ENCODE measurements at regions of chr3 and their contacts with region 1.

Region 1: DNA sequence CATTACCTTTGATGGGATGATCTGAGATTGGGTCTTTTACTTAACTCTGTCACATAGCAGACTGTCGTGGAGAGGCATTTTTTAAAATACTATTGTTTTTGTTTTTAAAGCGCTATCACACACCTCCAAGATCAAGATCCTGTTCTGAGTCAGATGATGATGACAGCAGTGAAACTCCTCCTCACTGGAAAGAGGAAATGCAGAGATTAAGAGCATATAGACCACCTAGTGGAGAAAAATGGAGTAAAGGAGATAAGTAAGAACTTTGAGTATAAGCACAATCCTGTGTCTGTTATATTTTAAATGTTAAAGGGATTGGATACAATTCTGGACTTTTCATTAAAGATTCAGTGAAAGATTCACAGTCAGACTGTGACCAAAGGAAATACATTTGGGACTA is 18.4 kb upstream of the ZBTB47 start:
- DNase-seq: no peak
- H3K4me3 Mint-ChIP-seq: no peak overlapping the region
- H3K27ac Mint-ChIP-seq: no peak overlapping the region
- H3K4me1 Mint-ChIP-seq: peaks cover 11% of the 10 kb centered on the region
- H3K27me3 Mint-ChIP-seq: no peaks in the 10 kb centered on the region

Region 2: GRCh38 chr3:42502429-42503250 is 132.5 kb before region 1 on chr3 and contains the start of gene VIPR1:
- intact Hi-C with region 1: loop called (anchors 5 kb)
- DNase-seq: peak; percentile 78
- H3K4me3 Mint-ChIP-seq: peak within 1 kb of the TSS; percentile 89
- H3K27ac Mint-ChIP-seq: no peak within 1 kb of the TSS
- H3K4me1 Mint-ChIP-seq: peaks cover 19% of the 10 kb centered on the region
- H3K27me3 Mint-ChIP-seq: peaks cover 42% of the 10 kb centered on the region
- total RNA-seq, gene VIPR1: 0.51 and 0.52 TPM in 2 replicates

Region 3: GRCh38 chr3:42569593-42570142 is 65.4 kb before region 1 on chr3:
- intact Hi-C with region 1: no loop called
- DNase-seq: no peak
- H3K4me3 Mint-ChIP-seq: no peak overlapping the region
- H3K27ac Mint-ChIP-seq: no peak overlapping the region
- H3K4me1 Mint-ChIP-seq: peaks cover 10% of the 10 kb centered on the region
- H3K27me3 Mint-ChIP-seq: no peaks in the 10 kb centered on the region

Region 4: DNA sequence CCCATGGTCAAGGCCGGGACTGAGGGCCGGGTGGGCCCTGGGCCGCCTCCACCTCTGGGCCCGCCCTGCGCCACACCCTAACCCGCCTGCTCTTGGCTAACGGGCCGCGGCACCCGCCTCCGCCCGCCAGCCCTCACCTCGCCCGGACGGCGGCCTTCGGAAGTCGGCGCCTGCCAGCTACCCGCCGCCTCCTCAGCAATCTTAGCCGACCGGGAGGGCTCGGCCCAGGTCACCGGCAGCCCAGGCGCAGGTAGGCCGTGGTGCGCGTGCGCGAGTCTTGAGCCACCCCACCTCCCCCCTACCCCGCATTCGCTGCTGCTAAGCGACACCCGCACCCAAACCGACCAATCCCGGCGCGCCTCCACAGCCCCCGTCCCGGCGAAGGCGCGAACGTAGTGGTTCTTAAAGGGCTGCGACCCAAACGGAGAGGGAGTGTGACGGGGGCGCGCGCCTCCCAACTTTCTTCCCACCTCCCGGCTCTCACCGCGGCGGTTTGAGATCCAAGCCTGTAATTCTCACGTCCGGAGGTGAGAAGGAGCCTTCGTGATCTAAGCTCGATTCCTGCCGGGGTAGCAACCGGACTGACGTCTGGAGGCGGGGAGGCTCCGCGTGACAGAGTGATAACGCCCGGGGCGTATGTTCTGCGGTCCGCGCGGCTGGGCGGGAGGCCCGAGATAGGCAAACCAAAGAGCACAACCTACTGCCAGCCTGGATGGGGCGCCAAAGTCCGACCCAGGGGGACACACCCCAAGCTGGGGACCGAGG is 53.2 kb before region 1 on chr3 and contains the start of gene SEC22C:
- intact Hi-C with region 1: loop called (anchors 1 kb)
- DNase-seq: peak; percentile 93
- H3K4me3 Mint-ChIP-seq: peak within 1 kb of the TSS; percentile 93
- H3K27ac Mint-ChIP-seq: peak within 1 kb of the TSS; percentile 90
- H3K4me1 Mint-ChIP-seq: peaks cover 47% of the 10 kb centered on the region
- H3K27me3 Mint-ChIP-seq: no peaks in the 10 kb centered on the region
- total RNA-seq, gene SEC22C: 36.1 and 40.1 TPM in 2 replicates

Region 5: DNA sequence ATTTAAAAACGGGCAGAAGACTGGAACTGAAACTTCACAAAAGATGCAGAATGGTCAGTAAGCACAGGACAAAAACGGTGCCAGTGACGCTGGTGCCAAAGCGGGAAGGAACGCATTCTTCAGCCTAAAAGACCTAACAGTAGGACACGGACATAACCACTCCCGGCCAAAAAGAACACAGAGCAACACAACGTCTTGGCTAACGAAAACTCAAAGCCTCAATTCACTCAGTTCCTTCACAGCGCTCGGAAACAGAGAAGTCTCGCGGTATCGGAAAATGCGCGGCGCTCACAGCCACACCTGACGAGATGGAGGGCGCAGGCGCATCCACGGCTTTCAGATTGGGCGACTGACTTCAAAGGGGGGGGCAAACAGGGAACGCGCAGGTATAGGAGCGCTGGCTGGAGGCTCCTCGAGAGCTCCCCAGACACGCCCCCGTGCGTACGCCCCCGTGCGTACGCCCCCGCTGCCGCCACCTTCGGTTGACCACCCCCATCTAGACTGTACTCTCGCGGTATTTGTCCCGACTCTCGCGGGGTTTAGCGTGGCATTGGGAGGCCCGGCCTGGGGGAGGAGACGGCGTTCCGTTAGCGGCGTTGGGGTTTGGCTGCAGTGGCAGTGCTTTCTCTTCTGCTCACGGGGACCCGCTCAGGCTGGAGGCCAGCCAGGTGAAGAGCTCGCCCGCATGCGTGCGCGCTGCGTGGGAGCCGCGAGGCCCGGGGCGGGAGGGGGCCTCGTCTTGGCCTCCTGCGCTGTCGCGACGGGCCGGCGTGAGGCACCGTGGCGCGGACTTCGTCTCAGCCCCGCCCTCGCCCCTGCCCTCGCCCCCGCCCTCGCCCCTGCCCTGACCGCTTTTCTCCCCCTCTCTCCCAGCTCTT is 34.8 kb before region 1 on chr3 and contains the start of gene NKTR:
- intact Hi-C with region 1: loop called (anchors 1 kb)
- DNase-seq: peak; percentile 99
- H3K4me3 Mint-ChIP-seq: peak within 1 kb of the TSS; percentile 91
- H3K27ac Mint-ChIP-seq: peak within 1 kb of the TSS; percentile 96
- H3K4me1 Mint-ChIP-seq: peaks cover 26% of the 10 kb centered on the region
- H3K27me3 Mint-ChIP-seq: no peaks in the 10 kb centered on the region
- total RNA-seq, gene NKTR: 76.6 and 86.2 TPM in 2 replicates

Region 6: DNA sequence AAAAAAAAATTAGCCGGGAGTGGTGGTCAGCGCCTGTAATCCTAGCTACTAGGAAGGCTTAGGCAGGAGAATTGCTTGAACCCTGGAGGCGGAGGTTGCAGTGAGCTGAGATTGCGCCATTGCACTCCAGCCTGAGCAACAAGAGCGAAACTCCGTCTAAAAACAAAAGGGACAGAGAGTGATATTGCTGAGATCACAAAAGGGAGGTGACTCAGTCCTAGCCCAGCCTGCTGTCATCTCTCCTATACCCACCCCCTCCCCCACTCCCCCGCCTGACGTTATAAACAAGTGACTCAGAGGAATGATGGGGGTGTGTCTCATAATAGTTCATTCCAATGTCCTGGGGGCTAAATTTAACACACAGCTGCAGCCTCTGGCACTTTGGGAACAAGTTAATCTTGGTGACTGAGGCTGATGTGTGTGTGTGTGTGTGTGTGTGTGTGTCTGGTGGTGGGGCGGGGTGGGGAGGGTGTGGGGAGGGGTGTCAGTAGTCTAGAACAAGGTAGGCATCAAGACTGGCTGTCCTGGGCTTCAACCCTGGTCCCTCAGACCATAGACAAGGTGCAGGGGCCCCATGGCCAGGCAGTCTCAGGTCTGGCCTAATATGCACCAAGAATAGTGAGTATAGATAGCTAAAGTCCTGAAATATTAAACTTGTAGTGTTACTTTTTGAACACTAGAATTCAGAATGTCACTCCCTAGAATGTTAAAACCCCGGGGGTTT is 48.9 kb after region 1 on chr3:
- intact Hi-C with region 1: loop called (anchors 2 kb)
- DNase-seq: no peak
- H3K4me3 Mint-ChIP-seq: no peak overlapping the region
- H3K27ac Mint-ChIP-seq: no peak overlapping the region
- H3K4me1 Mint-ChIP-seq: peaks cover 16% of the 10 kb centered on the region
- H3K27me3 Mint-ChIP-seq: peaks cover 14% of the 10 kb centered on the region

Region 7: GRCh38 chr3:42711491-42712343 is 76.6 kb after region 1 on chr3:
- intact Hi-C with region 1: no loop called
- DNase-seq: no peak
- H3K4me3 Mint-ChIP-seq: no peak overlapping the region
- H3K27ac Mint-ChIP-seq: no peak overlapping the region
- H3K4me1 Mint-ChIP-seq: no peaks in the 10 kb centered on the region
- H3K27me3 Mint-ChIP-seq: peaks cover 2% of the 10 kb centered on the region

Region 8: GRCh38 chr3:42772670-42773408 is 137.7 kb after region 1 on chr3 and contains the start of gene CCDC13:
- intact Hi-C with region 1: loop called (anchors 2 kb)
- DNase-seq: peak; percentile 85
- H3K4me3 Mint-ChIP-seq: peak within 1 kb of the TSS; percentile 86
- H3K27ac Mint-ChIP-seq: peak within 1 kb of the TSS; percentile 74
- H3K4me1 Mint-ChIP-seq: peaks cover 9% of the 10 kb centered on the region
- H3K27me3 Mint-ChIP-seq: peaks cover 9% of the 10 kb centered on the region
- total RNA-seq, gene CCDC13: 0.44 TPM in 1 of 2 replicates, not detected in the other

Region 9: DNA sequence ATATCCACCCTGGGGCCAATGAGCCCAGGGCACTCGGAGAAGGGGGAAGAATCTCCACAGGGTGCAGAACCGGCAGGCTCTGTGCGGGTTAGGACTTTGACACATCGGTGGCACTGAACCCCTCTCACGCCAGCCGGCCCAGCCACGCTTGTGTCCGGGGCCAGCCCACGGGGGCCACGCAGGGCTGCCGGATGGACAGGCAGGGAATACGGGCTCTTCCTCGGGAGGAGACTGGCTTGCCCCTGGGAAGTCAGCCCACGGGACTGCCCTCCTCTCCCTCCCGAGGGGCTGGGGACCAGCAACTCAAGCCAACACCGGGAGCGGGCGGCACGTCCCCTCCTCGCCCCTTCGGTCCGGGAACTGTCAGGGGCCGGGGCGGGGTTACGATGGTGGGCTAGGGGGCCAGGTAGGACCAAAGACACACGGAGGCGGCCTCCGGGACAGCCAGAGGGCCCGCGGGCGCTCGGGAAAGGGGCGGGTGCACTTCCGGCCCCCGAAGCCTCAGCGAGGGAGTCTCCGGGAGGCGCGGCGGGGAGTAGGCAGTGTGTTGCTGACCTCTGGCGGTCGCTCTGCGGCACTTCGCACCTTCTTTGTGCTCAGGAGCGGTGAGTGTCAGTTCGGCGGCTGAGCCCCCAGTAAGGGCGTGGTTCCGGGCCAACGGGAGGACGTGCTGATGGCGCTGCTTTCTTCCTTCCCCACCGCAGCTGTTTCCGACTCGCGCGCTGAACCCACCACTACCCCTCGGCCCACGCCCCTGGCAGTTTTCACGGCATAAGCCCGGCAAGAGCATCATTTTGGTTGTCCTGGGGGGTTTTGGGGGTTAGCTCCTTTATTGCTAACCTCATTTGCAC is 245.7 kb after region 1 on chr3:
- intact Hi-C with region 1: loop called (anchors 1 kb)
- DNase-seq: peak; percentile 85
- H3K4me3 Mint-ChIP-seq: peak overlapping the region; percentile 83
- H3K27ac Mint-ChIP-seq: peak overlapping the region; percentile 77
- H3K4me1 Mint-ChIP-seq: peaks cover 10% of the 10 kb centered on the region
- H3K27me3 Mint-ChIP-seq: peaks cover 13% of the 10 kb centered on the region